ENCODE measurements at regions of chr3 and their contacts with region 1.

Region 1: GRCh38 chr3:56799251-56799882 is 2.4 kb downstream of the ARHGEF3 start:
- DNase-seq: peak; percentile 65
- H3K4me3 ChIP-seq: no peak overlapping the region
- H3K27ac ChIP-seq: no peak overlapping the region
- H3K4me1 ChIP-seq: 0 out of 2 replicates have a peak, but pooled peaks cover 18% of the 10 kb centered on the region
- H3K27me3 ChIP-seq: no peaks in the 10 kb centered on the region

Region 2: GRCh38 chr3:56522374-56522773 is 277.0 kb before region 1 on chr3:
- in situ Hi-C with region 1: no loop called
- DNase-seq: no peak
- H3K4me3 ChIP-seq: no peak overlapping the region
- H3K27ac ChIP-seq: no peak overlapping the region
- H3K4me1 ChIP-seq: no peaks in the 10 kb centered on the region
- H3K27me3 ChIP-seq: peaks cover 9% of the 10 kb centered on the region

Region 3: GRCh38 chr3:56702490-56703315 is 96.7 kb before region 1 on chr3:
- in situ Hi-C with region 1: loop called (anchors 10 kb)
- DNase-seq: peak; percentile 82
- H3K4me3 ChIP-seq: no peak overlapping the region
- H3K27ac ChIP-seq: no peak overlapping the region
- H3K4me1 ChIP-seq: no peaks in the 10 kb centered on the region
- H3K27me3 ChIP-seq: no peaks in the 10 kb centered on the region

Region 4: GRCh38 chr3:56988458-56989168 is 189.2 kb after region 1 on chr3:
- in situ Hi-C with region 1: loop called (anchors 10 kb)
- DNase-seq: peak; percentile 84
- H3K4me3 ChIP-seq: no peak overlapping the region
- H3K27ac ChIP-seq: no peak overlapping the region
- H3K4me1 ChIP-seq: peaks cover 11% of the 10 kb centered on the region
- H3K27me3 ChIP-seq: no peaks in the 10 kb centered on the region